ENCODE measurements at regions of chrX and their contacts with region 1.

Region 1: GRCh38 chrX:55717521-55718497 is at the start of gene RRAGB:
- DNase-seq: peak; percentile 78 to 97 (median 88)
- ATAC-seq: peak; percentile 98
- H3K4me3 ChIP-seq: peak within 1 kb of the TSS; percentile 82
- H3K4me3 Mint-ChIP-seq: peak within 1 kb of the TSS; percentile 76
- H3K27ac ChIP-seq: peak within 1 kb of the TSS; percentile 85 to 89
- H3K27ac Mint-ChIP-seq: peak within 1 kb of the TSS; percentile 95
- H3K4me1 ChIP-seq: peaks cover 18% of the 10 kb centered on the region
- H3K4me1 Mint-ChIP-seq: peaks cover 43% of the 10 kb centered on the region
- H3K27me3 ChIP-seq: no peaks in the 10 kb centered on the region
- H3K27me3 Mint-ChIP-seq: no peaks in the 10 kb centered on the region
- CTCF ChIP-seq: peak; percentile 69
- total RNA-seq, gene RRAGB: 7.0 to 8.5 TPM

Region 2: DNA sequence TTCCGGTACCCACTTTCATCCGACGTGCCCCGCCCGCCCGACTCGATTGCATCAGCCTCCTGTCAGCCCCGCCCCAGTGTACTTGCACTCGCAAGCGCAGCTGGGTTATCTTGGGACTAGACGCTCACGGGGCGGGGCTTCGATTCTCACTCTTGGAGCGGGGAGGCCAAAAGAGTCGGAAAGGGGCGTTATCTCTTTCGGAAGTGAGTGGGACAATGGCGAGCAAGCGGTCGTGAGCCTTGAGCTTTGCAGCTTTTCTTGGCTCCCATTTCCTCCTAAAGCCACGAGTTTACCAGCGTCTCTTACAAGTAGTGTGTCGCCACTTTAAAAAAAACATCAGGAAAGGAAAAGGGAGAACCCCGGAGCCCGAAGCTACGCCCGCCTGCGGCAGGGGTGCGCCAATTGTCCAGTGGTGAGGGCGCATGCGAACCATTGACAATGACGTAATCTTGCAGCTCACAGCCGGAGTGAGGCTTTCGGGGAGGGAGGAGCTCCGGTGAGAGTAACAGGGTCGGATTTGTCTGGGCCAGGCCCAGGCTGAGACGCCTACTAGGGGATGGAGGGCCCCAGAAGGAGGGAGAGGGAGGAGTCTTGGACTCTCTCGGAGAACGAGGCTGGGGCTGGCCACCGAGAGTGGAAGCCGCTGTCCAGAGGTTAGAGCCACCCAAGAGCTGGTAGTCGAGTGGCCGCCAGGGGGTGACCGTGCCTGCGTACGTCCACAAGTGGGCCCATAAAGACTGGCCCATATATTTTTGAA is 1078.3 kb before region 1 on chrX:
- CTCF ChIA-PET with region 1: no interaction called
- POLR2A ChIA-PET with region 1: interaction called, 9 read pairs
- intact Hi-C with region 1: loop called in 1 of 2 experiments (anchors 10 kb)
- DNase-seq: peak; percentile 82 to 96 (median 90)
- ATAC-seq: peak; percentile 88
- H3K4me3 ChIP-seq: peak overlapping the region; percentile 60
- H3K4me3 Mint-ChIP-seq: peak overlapping the region; percentile 94
- H3K27ac ChIP-seq: peak overlapping the region; percentile 93 to 95
- H3K27ac Mint-ChIP-seq: peak overlapping the region; percentile 98
- H3K4me1 ChIP-seq: peaks cover 14% of the 10 kb centered on the region
- H3K4me1 Mint-ChIP-seq: peaks cover 14% of the 10 kb centered on the region
- H3K27me3 ChIP-seq: no peaks in the 10 kb centered on the region
- H3K27me3 Mint-ChIP-seq: no peaks in the 10 kb centered on the region
- CTCF ChIP-seq: peak; percentile 47

Region 3: GRCh38 chrX:54921427-54922021 is 796.3 kb before region 1 on chrX:
- CTCF ChIA-PET with region 1: no interaction called
- POLR2A ChIA-PET with region 1: no interaction called
- intact Hi-C with region 1: loop called in 1 of 2 experiments (anchors 5 kb)
- DNase-seq: peak; percentile 1 to 73 (median 44)
- ATAC-seq: peak; percentile 89
- H3K4me3 ChIP-seq: peak overlapping the region; percentile 61
- H3K4me3 Mint-ChIP-seq: peak overlapping the region; percentile 90
- H3K27ac ChIP-seq: no peak overlapping the region
- H3K27ac Mint-ChIP-seq: peak overlapping the region; percentile 76
- H3K4me1 ChIP-seq: peaks cover 18% of the 10 kb centered on the region
- H3K4me1 Mint-ChIP-seq: peaks cover 19% of the 10 kb centered on the region
- H3K27me3 ChIP-seq: no peaks in the 10 kb centered on the region
- H3K27me3 Mint-ChIP-seq: no peaks in the 10 kb centered on the region
- CTCF ChIP-seq: no peak

Region 4: GRCh38 chrX:55451990-55452832 is 265.6 kb before region 1 on chrX and contains the start of gene MAGEH1:
- CTCF ChIA-PET with region 1: no interaction called
- POLR2A ChIA-PET with region 1: interaction called, 14 read pairs
- intact Hi-C with region 1: no loop called
- DNase-seq: peak; percentile 52 to 92 (median 74)
- ATAC-seq: peak; percentile 88
- H3K4me3 ChIP-seq: peak within 1 kb of the TSS; percentile 85
- H3K4me3 Mint-ChIP-seq: peak within 1 kb of the TSS; percentile 99
- H3K27ac ChIP-seq: peak within 1 kb of the TSS; percentile 80 to 82
- H3K27ac Mint-ChIP-seq: peak within 1 kb of the TSS; percentile 99
- H3K4me1 ChIP-seq: peaks cover 8% of the 10 kb centered on the region
- H3K4me1 Mint-ChIP-seq: peaks cover 27% of the 10 kb centered on the region
- H3K27me3 ChIP-seq: no peaks in the 10 kb centered on the region
- H3K27me3 Mint-ChIP-seq: no peaks in the 10 kb centered on the region
- CTCF ChIP-seq: no peak
- total RNA-seq, gene MAGEH1: 17.7 to 18.7 TPM

Region 5: GRCh38 chrX:55695227-55696018 is 22.4 kb before region 1 on chrX:
- CTCF ChIA-PET with region 1: no interaction called
- POLR2A ChIA-PET with region 1: interaction called, 6 read pairs
- intact Hi-C with region 1: loop called in 1 of 2 experiments (anchors 1 kb)
- DNase-seq: peak in 6 of 14 experiments; percentile 7 to 70 (median 46)
- ATAC-seq: peak; percentile 98
- H3K4me3 ChIP-seq: peak overlapping the region; percentile 16
- H3K4me3 Mint-ChIP-seq: peak overlapping the region; percentile 72
- H3K27ac ChIP-seq: no peak overlapping the region
- H3K27ac Mint-ChIP-seq: peak overlapping the region; percentile 62
- H3K4me1 ChIP-seq: peaks cover 15% of the 10 kb centered on the region
- H3K4me1 Mint-ChIP-seq: peaks cover 41% of the 10 kb centered on the region
- H3K27me3 ChIP-seq: no peaks in the 10 kb centered on the region
- H3K27me3 Mint-ChIP-seq: no peaks in the 10 kb centered on the region
- CTCF ChIP-seq: no peak